B cell (primary cell): ENCODE measurements at regions of chr1 and their contacts with region 1.

Region 1: GRCh38 chr1:58422436-58422835 is 124.1 kb downstream of the OMA1 start:
- DNase-seq: no peak
- ATAC-seq: peak; percentile 73
- H3K4me3 ChIP-seq: no peak overlapping the region
- H3K4me3 Mint-ChIP-seq: no peak overlapping the region
- H3K27ac ChIP-seq: no peak overlapping the region
- H3K27ac Mint-ChIP-seq: no peak overlapping the region
- H3K4me1 ChIP-seq: no peaks in the 10 kb centered on the region
- H3K4me1 Mint-ChIP-seq: no peaks in the 10 kb centered on the region
- H3K27me3 ChIP-seq: no peaks in the 10 kb centered on the region
- H3K27me3 Mint-ChIP-seq: no peaks in the 10 kb centered on the region
- CTCF ChIP-seq: no peak

Region 2: GRCh38 chr1:58392083-58392482 is 30.4 kb before region 1 on chr1:
- CTCF ChIA-PET with region 1: interaction called, 14 read pairs
- POLR2A ChIA-PET with region 1: interaction called, 3 read pairs
- intact Hi-C with region 1: no loop called
- DNase-seq: peak; percentile 62
- ATAC-seq: peak; percentile 94
- H3K4me3 ChIP-seq: no peak overlapping the region
- H3K4me3 Mint-ChIP-seq: no peak overlapping the region
- H3K27ac ChIP-seq: no peak overlapping the region
- H3K27ac Mint-ChIP-seq: no peak overlapping the region
- H3K4me1 ChIP-seq: peaks cover 21 to 23% of the 10 kb centered on the region in 2 donors
- H3K4me1 Mint-ChIP-seq: no peaks in the 10 kb centered on the region
- H3K27me3 ChIP-seq: no peaks in the 10 kb centered on the region
- H3K27me3 Mint-ChIP-seq: no peaks in the 10 kb centered on the region
- CTCF ChIP-seq: no peak